ENCODE measurements at regions of chr11 and their contacts with region 1.

Region 1: DNA sequence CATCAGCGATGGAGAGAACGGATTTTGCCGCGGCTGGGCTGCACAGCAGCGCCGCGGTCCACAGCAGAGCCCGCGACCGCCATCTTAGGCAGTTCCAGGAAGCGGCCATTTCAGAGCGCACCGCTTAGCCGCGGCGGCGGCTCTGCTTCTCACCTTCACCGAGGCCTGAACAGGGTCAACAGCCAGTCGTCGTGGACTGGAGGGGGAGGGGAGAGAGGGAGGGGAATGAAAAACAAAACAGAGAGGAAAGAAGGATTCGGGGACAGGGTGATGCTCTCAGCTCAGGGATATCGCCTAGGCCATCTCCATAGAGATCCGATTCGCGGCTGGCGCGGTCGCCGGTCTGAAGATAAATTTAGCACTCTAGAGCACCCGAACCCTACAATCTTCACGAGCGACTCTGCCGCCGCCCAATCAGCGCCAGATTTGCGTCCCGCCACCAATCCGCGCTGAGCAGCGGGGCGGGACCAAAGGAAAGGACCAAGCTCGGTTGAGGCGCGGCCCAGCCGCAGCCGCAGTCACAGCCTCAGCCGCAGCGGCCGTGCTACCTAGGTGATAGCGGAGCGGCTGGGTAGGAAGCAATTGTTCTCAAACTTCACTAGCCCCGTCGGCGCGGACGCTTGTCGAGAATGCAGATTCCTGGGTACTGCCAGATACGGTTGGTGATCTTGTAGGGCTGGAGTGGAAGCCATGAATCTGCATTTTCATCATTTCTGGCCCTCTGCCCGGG is at the start of gene ZBED5:
- DNase-seq: peak; percentile 97 to 98
- ATAC-seq: peak; percentile 87 to 92
- H3K4me3 ChIP-seq: peak within 1 kb of the TSS; percentile 89 to 97 (median 94)
- H3K27ac ChIP-seq: peak within 1 kb of the TSS; percentile 95 to 99 (median 98)
- H3K4me1 ChIP-seq: peaks cover 31 to 36% of the 10 kb centered on the region in 2 donors
- H3K27me3 ChIP-seq: no peaks in the 10 kb centered on the region
- CTCF ChIP-seq: peak in 2 of 5 experiments; percentile 6 to 43
- POLR2A ChIP-seq: peak; percentile 98 to 99
- total RNA-seq, gene ZBED5: 11.3 to 36.3 (median 18.5) TPM

Region 2: DNA sequence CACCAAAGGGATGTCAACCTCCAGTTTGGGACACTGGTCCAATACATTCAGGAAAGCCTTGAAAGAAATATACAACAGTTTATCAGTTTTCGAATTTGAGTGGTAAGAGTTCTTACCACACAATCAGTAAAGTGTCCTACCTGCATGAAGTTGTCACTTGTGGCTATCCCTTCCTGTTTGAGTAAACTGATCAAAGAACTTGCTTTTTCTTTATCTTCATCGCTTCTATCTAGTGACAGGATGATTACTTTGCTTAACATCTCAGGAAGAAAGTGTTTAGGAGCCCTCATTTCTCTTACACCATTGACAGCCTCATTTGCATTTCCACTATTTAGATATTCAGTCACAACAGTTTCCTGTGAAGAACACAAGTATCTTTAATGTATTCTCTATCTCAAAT is 57.6 kb before region 1 on chr11:
- in situ Hi-C with region 1: loop called in 2 of 4 experiments (anchors 5 to 10 kb)
- intact Hi-C with region 1: no loop called
- DNase-seq: no peak
- ATAC-seq: no peak
- H3K4me3 ChIP-seq: no peak overlapping the region
- H3K27ac ChIP-seq: peak overlapping the region in 3 of 4 donors; percentile 3 to 14 (median 12)
- H3K4me1 ChIP-seq: peaks cover 8 to 18% of the 10 kb centered on the region in 2 donors
- H3K27me3 ChIP-seq: no peaks in the 10 kb centered on the region
- CTCF ChIP-seq: no peak
- POLR2A ChIP-seq: no peak

Region 3: DNA sequence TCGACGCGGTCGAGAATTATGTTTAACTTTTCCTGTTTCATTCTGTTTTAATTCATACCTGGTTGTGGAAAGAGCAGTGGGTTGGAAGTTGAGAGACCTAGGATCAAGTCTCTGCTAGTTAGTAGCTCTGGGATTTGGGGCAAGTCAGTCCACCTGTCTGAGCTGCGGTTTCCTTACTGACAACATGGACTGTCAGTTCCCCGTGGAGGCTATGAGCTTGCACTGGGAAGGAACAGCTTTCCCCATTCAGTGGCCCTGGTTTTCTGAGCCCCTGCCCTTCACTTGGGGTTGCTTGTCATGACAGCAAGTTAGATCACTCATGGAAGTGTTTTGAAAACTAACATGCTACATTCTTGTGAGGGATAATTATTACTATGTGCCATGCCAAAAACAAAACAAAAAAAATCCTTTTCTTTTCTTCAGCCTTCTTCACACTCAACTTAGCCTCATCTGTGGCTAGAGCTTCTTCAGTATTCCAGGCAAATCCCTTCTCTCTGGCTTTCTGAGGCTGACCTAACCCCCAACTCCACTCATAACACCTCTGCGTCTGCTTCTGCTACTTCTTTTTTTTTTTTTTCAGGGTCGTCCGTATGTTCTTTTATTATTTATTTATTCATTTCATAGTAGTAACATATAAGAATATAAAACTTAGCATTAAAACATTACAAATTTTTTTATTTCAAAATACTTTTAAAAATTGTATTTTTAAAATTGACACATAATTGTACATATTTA is 43.0 kb after region 1 on chr11:
- in situ Hi-C with region 1: loop called in 1 of 4 experiments (anchors 5 kb)
- intact Hi-C with region 1: loop called (anchors 1 kb)
- DNase-seq: peak; percentile 60 to 63
- ATAC-seq: peak; percentile 41 to 61
- H3K4me3 ChIP-seq: peak overlapping the region in 3 of 4 donors; percentile 7 to 55 (median 20)
- H3K27ac ChIP-seq: peak overlapping the region; percentile 88 to 96 (median 94)
- H3K4me1 ChIP-seq: peaks cover 56 to 60% of the 10 kb centered on the region in 2 donors
- H3K27me3 ChIP-seq: no peaks in the 10 kb centered on the region
- CTCF ChIP-seq: no peak
- POLR2A ChIP-seq: no peak

Region 4: GRCh38 chr11:10982704-10983510 is 125.0 kb after region 1 on chr11:
- in situ Hi-C with region 1: no loop called
- intact Hi-C with region 1: no loop called
- DNase-seq: no peak
- ATAC-seq: no peak
- H3K4me3 ChIP-seq: no peak overlapping the region
- H3K27ac ChIP-seq: no peak overlapping the region
- H3K4me1 ChIP-seq: no peaks in the 10 kb centered on the region
- H3K27me3 ChIP-seq: no peaks in the 10 kb centered on the region
- CTCF ChIP-seq: no peak
- POLR2A ChIP-seq: no peak

Region 5: GRCh38 chr11:11215944-11216343 is 358.1 kb after region 1 on chr11:
- in situ Hi-C with region 1: no loop called
- intact Hi-C with region 1: no loop called
- DNase-seq: no peak
- ATAC-seq: no peak
- H3K4me3 ChIP-seq: no peak overlapping the region
- H3K27ac ChIP-seq: no peak overlapping the region
- H3K4me1 ChIP-seq: peaks cover 9 to 22% of the 10 kb centered on the region in 2 donors
- H3K27me3 ChIP-seq: no peaks in the 10 kb centered on the region
- CTCF ChIP-seq: no peak
- POLR2A ChIP-seq: no peak

Region 6: DNA sequence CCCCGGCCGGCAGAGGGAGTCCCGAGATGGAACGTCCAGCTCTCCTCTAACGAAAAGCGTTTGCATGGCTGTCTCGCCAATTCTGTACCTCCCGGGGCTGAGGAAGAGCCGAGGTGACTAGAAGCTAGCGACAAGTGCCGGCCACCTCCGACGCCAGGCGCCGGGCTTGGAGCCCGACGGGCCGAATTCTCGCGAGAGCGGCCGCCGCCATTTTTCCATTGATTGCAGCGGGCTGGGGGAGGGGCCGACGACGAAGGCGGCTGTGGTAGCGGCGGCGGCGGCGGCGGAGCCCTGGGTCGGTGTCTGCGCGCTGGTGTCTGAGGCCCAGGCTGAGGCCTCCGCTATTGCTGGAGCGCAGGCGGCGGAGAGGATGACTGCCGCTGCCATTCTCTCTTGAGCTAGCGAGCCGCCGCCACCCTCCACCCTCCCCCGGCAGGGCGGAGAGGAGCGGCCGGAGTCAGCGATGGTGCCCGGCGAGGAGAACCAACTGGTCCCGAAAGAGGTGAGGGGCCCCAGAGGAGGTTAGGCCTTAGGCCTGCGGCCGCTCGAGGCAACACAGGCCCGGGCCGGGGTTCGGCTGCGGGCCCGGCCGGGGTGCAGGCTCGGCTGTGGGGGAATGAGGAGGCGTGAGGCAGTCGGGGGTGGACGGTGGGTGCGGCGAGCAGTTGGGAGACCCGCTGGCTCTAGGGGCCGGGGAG is 984.0 kb after region 1 on chr11 and contains the start of gene USP47:
- in situ Hi-C with region 1: no loop called
- intact Hi-C with region 1: loop called (anchors 10 kb)
- DNase-seq: peak; percentile 78 to 89
- ATAC-seq: peak; percentile 68 to 74
- H3K4me3 ChIP-seq: peak within 1 kb of the TSS; percentile 93 to 99 (median 96)
- H3K27ac ChIP-seq: peak within 1 kb of the TSS; percentile 99 to 100 (median 99)
- H3K4me1 ChIP-seq: peaks cover 34 to 36% of the 10 kb centered on the region in 2 donors
- H3K27me3 ChIP-seq: no peaks in the 10 kb centered on the region
- CTCF ChIP-seq: peak; percentile 54 to 83 (median 73)
- POLR2A ChIP-seq: peak; percentile 88 to 91
- total RNA-seq, gene USP47: 84.4 to 222 (median 97.6) TPM